Dorsolateral prefrontal cortex (tissue), 120 donors: ENCODE measurements at regions of chr1 and their contacts with region 1.

Region 1: DNA sequence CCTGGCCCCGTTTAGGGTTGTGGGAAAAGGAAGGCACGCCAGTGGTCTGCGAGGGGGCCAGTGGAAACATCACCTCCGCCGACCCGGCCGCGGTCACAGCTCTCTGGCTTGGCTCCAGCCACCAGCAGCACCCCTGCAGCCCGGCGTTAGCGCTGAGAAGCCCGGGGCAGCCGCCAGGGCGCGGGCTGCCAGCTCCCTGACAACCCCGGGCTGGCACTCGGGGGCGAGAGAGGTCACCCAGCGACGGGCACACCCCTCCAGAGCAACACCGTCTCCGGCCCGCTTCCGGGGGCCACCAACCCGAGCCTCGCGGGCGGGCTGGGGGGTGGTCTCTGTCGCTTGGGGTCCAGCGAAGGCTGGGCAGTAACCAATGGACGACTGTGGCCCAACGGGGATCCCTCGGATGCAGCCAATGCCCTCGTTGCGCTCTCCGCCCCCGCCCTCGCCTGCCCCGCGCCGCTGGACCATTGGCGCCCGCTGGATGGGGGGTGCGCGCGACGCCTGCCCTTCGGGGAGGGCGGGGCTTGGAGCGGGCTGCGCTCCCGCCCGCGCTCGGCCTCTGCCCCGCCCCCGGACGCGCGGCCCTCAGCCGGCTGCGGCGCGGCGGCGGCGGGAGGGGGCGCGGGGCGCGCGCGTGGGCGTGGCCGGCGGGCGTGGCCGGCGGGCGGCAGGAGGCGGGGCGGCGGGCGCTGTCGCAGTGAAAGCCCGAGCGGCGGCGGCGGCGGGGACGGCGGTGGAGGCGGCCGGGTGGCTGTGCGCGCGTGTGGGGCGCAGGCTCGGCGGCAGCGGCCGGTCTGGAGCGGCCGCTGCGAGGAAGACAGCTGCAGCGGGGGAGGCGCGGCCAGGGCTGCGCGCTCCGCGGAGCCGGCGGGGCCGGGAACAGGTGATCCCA is at the start of gene MAN1C1:
- DNase-seq: peak; percentile 83 to 95 (median 89)
- H3K4me3 ChIP-seq: peak within 1 kb of the TSS; percentile 41 to 93 (median 84)
- H3K27ac ChIP-seq: peak within 1 kb of the TSS; percentile 36 to 97 (median 91)
- H3K27me3 ChIP-seq: no peaks in the 10 kb centered on the region
- CTCF ChIP-seq: peak in 54 of 56 donors; percentile 21 to 72 (median 55)
- total RNA-seq, gene MAN1C1: 32.3 to 86.5 (median 58.9) TPM

Region 2: DNA sequence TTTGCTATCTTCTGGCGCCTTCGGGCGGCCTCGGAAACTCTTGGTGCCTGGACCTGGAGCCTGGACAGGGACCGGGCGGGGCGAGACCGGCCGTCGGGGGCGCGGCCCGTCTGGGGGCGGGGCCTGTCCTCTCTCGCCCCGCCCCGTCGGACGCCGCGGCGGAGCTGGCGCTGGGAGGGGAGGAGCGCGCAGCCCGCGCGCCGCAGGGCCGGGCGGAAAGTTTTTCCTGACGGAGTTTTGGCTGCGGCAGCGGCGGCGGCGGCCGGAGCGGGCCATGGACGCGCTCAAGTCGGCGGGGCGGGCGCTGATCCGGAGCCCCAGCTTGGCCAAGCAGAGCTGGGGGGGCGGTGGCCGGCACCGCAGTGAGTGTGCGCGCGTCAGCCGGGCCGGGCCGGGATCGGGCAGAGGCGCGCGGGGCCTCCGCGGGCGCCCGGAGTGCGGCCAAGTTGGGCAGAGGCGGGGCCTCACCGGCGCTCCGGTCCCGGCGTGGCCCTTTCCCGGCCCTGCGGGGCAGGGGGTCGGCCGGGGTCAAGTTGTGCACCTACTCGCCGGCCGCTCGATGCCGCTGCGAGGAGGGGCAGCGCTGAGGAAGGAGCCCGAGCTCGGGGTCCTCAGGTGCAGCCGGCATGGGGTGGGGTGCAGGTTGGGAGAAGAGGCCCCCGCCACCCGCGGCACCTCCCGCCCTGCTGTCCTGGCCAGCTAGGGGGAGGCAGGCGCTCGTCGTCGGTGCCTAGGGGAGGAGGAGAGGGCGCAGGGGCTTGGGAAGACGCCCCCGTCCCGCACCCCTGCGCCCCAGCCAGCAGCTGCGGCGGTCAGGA is 72.7 kb before region 1 on chr1 and contains the start of gene LDLRAP1:
- intact Hi-C with region 1: loop called in 1 of 2 experiments (anchors 5 kb)
- DNase-seq: peak; percentile 38 to 88 (median 67)
- H3K4me3 ChIP-seq: peak within 1 kb of the TSS; percentile 40 to 96 (median 85)
- H3K27ac ChIP-seq: peak within 1 kb of the TSS in 58 of 59 donors; percentile 45 to 99 (median 81)
- H3K27me3 ChIP-seq: no peaks in the 10 kb centered on the region
- CTCF ChIP-seq: peak in 12 of 56 donors; percentile 7 to 39 (median 18)
- total RNA-seq, gene LDLRAP1: 6.1 to 62.3 (median 19.3) TPM

Region 3: DNA sequence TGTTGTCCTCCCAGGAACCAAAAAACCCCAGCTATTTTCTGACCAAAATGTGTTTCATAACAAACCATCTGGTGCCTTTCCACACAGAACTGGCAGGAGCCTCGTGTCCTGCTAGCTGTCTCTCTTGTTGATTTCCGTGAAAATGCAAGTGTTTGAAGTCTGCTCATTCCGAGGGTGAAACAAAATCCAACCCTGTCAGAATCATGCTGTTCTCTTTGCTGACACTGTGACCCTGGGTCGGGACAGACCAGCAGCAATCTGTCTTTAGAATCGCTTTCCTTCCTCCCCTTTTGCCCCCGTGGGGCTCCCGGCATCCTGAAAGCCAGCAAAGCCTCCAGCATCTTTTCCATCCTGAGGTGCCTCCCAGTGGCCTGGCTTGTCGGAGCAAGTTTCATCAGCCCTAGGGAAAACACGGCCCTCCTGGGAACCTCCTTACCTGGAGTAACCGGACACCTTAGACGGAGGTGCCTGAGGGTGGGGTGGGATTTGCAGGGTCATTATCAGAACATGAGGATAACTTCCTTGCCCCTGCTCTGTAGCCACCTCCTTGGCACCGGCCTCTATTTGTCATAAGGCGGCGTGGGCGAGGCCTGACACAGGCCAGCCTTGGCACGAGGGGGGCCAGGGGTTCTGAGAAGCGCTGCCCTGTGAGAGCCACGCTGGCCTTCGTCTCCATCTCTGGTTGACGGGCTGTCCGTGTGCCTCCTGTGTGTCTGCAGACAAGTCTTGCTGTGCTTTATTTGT is 48.1 kb before region 1 on chr1:
- intact Hi-C with region 1: loop called (anchors 2 kb)
- DNase-seq: peak in 6 of 10 donors; percentile 48 to 76 (median 58)
- H3K4me3 ChIP-seq: no peak overlapping the region
- H3K27ac ChIP-seq: peak overlapping the region; percentile 79 to 99 (median 98)
- H3K27me3 ChIP-seq: no peaks in the 10 kb centered on the region
- CTCF ChIP-seq: peak in 37 of 56 donors; percentile 7 to 50 (median 23)

Region 4: DNA sequence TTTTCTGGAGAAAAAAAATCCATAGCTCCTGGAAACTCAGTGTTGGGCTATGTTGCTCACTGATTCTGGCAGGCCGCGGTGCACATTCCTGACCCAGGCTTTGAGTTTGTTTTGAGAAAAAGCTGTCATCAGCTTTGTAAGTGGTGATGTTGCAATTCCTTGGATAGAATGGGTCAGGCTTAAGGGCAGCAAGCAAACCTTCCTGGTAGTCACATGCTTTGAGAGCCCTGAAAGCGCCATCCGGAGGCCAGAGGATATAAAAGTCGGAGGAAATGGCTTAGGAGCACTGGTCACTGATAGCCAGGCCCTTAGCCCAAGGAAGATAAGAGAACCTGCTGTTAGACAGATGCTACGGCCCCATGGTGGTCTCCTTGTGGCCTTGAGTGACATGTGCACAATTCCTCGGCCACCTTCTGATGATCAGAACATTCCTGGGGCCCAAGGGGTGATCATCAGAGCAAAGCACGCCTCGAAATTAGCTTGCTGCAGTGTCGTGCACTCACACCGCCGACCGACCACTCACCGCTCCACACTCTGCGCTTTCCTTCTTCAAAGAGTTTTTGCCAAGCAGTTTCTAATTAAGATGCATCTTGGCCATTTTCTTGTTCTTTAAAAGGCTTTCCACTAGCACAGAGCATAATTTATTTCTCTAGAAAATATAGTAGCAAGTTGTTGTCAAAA is 78.9 kb after region 1 on chr1:
- intact Hi-C with region 1: loop called (anchors 5 kb)
- DNase-seq: peak in 1 of 10 donors; percentile 53
- H3K4me3 ChIP-seq: peak overlapping the region in 4 of 59 donors; percentile 1 to 22 (median 14)
- H3K27ac ChIP-seq: peak overlapping the region in 58 of 59 donors; percentile 3 to 92 (median 78)
- H3K27me3 ChIP-seq: no peaks in the 10 kb centered on the region
- CTCF ChIP-seq: peak in 23 of 56 donors; percentile 2 to 35 (median 16)

Region 5: DNA sequence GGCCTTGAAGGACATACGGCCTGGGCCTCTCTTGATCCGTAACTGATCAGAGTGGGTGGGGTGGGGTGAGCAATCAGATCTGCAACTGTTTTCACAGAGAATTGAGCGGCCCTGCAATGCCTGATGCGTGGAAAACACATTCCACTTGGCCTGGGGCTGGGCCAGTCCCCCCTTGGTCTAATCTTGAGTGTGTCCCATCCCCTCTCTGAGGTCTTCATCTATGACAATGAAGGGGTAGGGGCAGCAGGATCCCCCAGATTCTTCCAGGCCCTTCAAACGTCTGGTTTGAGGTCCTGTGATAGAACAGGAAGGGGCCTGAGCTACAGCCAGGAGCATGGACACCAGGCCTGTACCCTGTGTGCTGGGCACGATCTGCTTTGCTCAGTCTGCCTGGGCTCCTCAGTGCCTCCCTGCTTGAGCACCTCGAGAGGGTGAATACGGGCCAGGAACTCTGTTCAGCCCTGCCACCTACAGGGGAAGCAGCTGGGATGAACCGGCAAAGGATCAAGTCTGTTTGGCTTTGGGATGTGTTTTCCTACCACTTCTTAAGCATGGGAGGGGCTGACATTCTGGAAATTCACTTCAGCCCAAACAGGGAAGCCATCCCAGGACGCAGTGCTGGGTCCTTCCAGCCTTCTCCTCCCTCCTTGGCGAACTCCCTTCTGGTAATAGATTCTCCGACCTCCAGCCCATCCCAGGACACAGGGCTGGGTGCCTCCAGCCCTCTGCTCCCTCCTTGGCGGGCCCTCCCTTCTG is 127.7 kb after region 1 on chr1:
- intact Hi-C with region 1: loop called in 1 of 2 experiments (anchors 5 kb)
- DNase-seq: peak in 7 of 10 donors; percentile 40 to 79 (median 55)
- H3K4me3 ChIP-seq: no peak overlapping the region
- H3K27ac ChIP-seq: peak overlapping the region; percentile 15 to 89 (median 78)
- H3K27me3 ChIP-seq: no peaks in the 10 kb centered on the region
- CTCF ChIP-seq: peak in 53 of 56 donors; percentile 10 to 67 (median 44)

Region 6: DNA sequence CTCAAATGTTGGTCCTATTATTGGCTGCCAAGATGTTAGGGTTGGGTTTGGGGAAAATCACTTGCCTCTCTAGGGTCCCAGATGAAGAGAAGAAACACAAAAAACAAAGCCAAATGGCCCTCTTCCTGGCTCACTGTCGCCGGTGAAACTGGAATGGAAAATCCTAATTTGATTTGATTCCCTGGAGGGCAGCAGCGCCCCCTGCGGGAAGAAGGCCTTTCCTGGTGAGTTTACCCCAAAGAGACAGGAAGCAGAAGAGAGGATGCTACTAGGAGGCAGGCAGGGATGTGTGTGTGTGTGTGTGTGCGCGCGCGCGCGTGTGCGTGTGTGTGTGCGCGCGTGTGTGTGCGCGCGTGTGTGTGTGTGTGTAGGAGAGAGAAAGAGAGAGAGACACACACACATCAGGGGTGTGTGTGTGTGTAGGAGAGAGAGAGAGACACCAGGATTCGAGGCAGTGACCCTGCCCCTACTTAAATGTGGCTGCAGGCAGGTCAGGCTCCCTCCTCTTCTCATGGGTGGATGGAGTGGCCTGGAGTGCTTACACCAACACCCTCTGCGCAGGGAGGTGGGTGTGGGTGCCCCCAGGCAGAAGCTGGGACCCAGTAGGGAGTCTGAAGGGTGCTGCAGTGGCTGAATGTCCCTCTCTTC is 180.6 kb after region 1 on chr1:
- intact Hi-C with region 1: loop called (anchors 2 to 5 kb)
- DNase-seq: peak; percentile 70 to 93 (median 83)
- H3K4me3 ChIP-seq: peak overlapping the region in 3 of 59 donors; percentile 2 to 17 (median 5)
- H3K27ac ChIP-seq: peak overlapping the region in 40 of 59 donors; percentile 0 to 95 (median 46)
- H3K27me3 ChIP-seq: no peaks in the 10 kb centered on the region
- CTCF ChIP-seq: peak; percentile 44 to 88 (median 73)

Region 7: DNA sequence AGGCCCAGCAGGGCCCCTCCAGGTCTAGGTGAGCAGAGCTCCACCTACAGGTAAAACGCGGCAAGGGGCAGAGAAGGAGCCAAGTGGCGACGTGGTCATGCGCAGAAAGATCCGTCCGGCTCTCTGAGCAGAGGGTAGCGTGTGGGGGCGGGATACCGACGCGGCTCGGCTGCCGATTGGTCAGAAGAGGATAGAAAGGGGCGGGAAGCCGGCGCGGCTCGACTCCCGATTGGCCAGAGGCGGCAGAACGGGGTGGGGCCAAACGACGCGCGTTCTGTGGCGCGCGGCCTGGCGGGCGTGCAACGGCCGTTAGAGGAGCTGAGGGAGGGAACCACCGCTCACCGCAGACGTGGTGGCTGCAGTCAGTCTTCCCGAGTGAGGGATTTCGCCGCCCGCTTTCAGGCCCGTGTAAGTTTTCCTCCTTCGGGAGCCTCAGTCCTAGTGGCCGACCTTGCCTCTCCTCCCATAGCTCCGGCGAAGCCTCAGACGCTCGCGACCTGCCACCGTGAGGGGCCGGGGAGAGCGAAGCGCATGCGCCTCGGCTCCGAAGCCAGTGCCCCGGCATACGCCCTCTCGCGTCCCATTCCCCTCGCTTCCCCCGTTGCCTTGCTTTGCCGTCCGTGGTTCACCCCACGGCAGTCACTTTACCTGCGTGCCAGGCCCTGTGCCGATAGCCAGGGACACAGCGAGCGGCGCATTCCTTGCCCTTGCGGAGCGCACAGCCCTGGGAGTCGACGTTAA is 617.7 kb after region 1 on chr1 and contains the start of gene CEP85:
- intact Hi-C with region 1: no loop called
- DNase-seq: peak; percentile 97 to 100 (median 99)
- H3K4me3 ChIP-seq: peak within 1 kb of the TSS; percentile 60 to 100 (median 88)
- H3K27ac ChIP-seq: peak within 1 kb of the TSS; percentile 46 to 99 (median 89)
- H3K27me3 ChIP-seq: no peaks in the 10 kb centered on the region
- CTCF ChIP-seq: peak; percentile 48 to 93 (median 84)
- total RNA-seq, gene CEP85: 11.3 to 55.4 (median 22.9) TPM